ENCODE measurements at regions of chr20 and their contacts with region 1.

Region 1: DNA sequence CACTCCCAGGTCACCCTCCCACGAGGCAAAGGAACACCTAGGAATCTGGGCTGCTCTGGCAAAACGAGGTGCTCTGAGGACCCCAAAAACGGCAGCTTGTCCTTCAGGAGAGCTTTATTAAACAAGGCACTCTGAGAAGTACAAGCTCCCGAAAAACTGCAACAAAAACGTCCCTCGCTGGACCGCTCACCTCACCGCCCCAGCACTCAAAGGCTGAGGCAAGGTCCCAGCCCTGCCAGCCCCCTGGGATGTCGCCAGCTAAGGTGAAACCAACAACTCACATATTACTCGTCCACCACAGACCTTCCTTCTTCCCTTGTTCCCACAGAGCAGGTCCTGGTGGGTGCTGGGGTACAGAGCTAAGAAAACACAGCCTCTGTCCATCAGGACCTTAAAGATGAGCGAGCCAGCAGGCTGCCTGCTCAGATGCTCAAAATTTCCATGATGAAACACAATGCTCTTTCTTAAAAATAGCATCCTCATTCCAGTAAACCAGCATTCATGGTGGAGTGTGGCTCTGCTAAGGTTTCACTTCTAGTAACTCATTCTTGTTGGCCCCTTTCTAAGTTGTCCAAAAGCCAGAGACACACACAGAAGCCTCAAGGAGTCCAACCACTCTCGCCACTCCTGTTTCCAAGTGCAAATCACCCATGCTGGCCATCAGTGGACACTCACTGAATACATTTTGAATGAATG is 35.9 kb downstream of the ATP9A start:
- DNase-seq: no peak
- H3K4me3 Mint-ChIP-seq: peak overlapping the region; percentile 82
- H3K27ac Mint-ChIP-seq: peak overlapping the region; percentile 96
- H3K4me1 Mint-ChIP-seq: peaks cover 14% of the 10 kb centered on the region
- H3K27me3 Mint-ChIP-seq: peaks cover 2% of the 10 kb centered on the region

Region 2: GRCh38 chr20:51710361-51710894 is 21.8 kb before region 1 on chr20:
- intact Hi-C with region 1: no loop called
- DNase-seq: no peak
- H3K4me3 Mint-ChIP-seq: no peak overlapping the region
- H3K27ac Mint-ChIP-seq: no peak overlapping the region
- H3K4me1 Mint-ChIP-seq: peaks cover 15% of the 10 kb centered on the region
- H3K27me3 Mint-ChIP-seq: peaks cover 15% of the 10 kb centered on the region

Region 3: DNA sequence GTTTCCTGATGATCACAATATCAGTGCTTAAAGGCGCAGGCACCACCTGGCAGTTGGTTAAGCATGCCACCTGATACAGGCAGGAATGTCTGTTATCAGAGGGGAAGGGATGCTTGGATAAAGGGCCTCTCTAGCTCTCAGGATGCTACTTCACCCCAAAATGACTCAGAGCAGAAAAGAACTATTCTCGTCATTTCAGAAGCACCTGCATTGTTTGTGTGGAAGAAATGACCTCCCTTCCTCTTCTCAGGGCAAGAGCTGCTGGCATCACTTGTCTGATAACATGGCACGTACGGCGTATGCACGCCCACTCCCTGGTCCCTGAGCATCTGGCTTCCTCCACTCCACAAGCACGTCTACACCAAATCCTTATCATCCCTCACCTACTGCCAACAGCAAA is 11.4 kb before region 1 on chr20:
- intact Hi-C with region 1: loop called (anchors 1 kb)
- DNase-seq: no peak
- H3K4me3 Mint-ChIP-seq: no peak overlapping the region
- H3K27ac Mint-ChIP-seq: peak overlapping the region; percentile 77
- H3K4me1 Mint-ChIP-seq: peaks cover 31% of the 10 kb centered on the region
- H3K27me3 Mint-ChIP-seq: peaks cover 3% of the 10 kb centered on the region

Region 4: DNA sequence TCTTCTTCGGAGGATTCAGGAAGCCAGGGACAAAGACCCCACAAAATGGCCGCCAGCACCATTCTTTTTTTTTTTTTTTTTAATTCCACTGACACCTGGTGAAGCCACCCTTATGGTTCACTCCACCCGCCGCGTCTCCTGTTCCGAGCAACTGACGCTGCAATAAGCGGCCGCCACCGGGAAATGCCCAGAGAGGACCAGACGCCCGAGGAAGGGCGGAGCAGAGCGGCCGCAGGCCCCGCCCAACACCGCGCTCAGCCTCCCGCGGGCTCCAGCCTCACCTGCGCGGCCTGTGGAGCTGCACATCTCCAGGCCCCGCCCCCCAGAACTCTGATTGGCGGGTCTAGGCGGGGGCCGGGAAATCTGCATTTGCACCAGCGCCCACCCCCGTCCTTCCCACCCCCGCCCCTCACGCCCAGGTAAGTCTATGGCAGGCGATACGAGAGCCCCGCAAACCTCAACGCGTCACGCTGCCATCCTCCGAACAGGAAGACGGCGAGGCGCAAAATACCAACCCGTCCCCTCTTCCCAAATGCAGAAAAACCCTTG is 34.8 kb after region 1 on chr20:
- intact Hi-C with region 1: loop called (anchors 5 kb)
- DNase-seq: peak; percentile 44
- H3K4me3 Mint-ChIP-seq: peak overlapping the region; percentile 65
- H3K27ac Mint-ChIP-seq: no peak overlapping the region
- H3K4me1 Mint-ChIP-seq: peaks cover 7% of the 10 kb centered on the region
- H3K27me3 Mint-ChIP-seq: peaks cover 32% of the 10 kb centered on the region